Gastrocnemius medialis (tissue), 4 donors: ENCODE measurements at regions of chr6 and their contacts with region 1.

Region 1: GRCh38 chr6:106223300-106223930 is 102.1 kb downstream of the ATG5 start:
- DNase-seq: peak in 1 of 2 donors; percentile 28
- ATAC-seq: no peak
- H3K4me3 ChIP-seq: no peak overlapping the region
- H3K27ac ChIP-seq: no peak overlapping the region
- H3K4me1 ChIP-seq: peaks cover 0 to 5% of the 10 kb centered on the region in 2 donors
- H3K27me3 ChIP-seq: no peaks in the 10 kb centered on the region
- CTCF ChIP-seq: peak; percentile 42 to 63 (median 56)
- POLR2A ChIP-seq: no peak

Region 2: GRCh38 chr6:105484238-105485161 is 738.9 kb before region 1 on chr6:
- in situ Hi-C with region 1: loop called in 2 of 4 experiments (anchors 10 kb)
- intact Hi-C with region 1: loop called (anchors 5 kb)
- DNase-seq: no peak
- ATAC-seq: peak in 1 of 2 donors; percentile 46
- H3K4me3 ChIP-seq: no peak overlapping the region
- H3K27ac ChIP-seq: no peak overlapping the region
- H3K4me1 ChIP-seq: peaks cover 0 to 3% of the 10 kb centered on the region in 2 donors
- H3K27me3 ChIP-seq: no peaks in the 10 kb centered on the region
- CTCF ChIP-seq: peak; percentile 61 to 89 (median 77)
- POLR2A ChIP-seq: no peak

Region 3: DNA sequence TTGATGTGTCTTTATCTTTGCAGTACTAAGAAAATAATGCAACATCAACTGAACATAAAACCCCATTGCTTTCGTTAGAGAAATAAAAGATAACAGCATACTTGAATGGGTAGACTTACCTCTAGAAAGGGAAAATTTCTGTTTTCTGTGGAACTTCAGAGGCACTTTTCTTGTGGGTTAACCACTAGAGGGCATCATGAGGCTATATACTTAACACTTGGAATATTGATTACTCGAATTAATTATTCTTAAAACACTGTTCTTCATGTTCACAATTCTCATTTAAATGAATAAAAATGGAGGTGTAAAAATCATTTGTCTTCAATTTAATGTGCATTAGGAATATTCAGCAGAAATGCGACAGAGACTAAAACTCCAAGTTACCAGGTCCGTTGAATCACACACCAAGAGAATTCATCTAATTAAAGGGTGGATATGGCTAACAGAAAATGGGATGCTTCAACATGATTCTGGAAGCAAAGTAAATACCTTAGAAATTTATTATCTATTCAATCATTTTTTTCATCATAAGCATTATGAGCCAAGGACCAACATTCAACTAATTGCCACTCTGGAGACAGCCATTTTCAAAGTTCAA is 489.8 kb before region 1 on chr6:
- in situ Hi-C with region 1: loop called in 2 of 4 experiments (anchors 10 kb)
- intact Hi-C with region 1: loop called (anchors 1 kb)
- DNase-seq: no peak
- ATAC-seq: no peak
- H3K4me3 ChIP-seq: no peak overlapping the region
- H3K27ac ChIP-seq: no peak overlapping the region
- H3K4me1 ChIP-seq: no peaks in the 10 kb centered on the region
- H3K27me3 ChIP-seq: no peaks in the 10 kb centered on the region
- CTCF ChIP-seq: peak; percentile 44 to 64 (median 56)
- POLR2A ChIP-seq: no peak